Activated B cell treated with CpG ODN at 0.5 μM for 24 hours (primary cell): ENCODE measurements at regions of chr7 and their contacts with region 1.

Region 1: DNA sequence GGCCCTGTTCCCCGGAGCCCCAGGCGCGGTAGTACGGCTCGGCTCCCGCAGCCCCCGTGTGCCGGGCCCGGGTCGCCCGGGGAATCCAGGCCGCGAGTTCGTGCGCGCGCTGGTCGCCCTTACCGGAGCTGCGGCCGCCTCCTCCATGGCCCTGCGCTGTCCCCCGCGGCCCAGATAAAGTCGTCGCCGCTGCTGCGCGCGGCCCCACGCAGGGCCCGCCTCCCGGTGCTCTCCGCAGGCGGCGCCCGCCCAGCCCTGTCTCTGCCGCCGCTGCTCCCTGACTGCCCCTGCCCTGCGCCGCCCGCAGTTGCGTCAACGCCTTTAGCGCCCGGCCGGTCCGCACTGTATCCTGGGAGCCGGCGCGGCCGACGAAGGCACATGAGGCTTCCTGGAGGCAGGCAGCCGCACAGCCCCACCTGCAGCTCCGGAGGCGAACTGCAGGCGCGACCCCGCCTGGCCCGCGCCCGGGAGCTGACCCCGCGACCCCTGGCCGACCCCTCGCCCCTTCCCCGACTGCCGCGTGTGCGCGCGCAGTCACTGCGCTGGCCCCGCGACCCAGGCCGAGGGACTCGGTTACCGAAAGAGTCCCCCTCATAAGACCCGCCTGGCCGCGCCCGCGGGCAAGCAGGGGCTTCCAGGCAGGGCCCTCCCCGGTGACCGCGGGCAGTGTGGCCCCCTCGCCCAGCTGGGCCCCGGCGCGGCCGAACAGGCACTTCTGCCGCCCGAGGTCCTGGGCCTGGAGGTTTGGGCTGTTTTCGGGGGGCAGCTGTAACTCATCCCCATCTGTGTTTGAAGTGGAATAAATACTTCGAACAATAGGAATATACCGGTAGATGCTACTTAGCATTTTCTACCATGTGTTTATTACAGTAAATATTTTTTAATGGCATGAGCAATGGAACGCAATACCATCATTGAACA is 127.1 kb upstream of the ZNF746 start:
- DNase-seq: peak; percentile 95
- ATAC-seq: peak; percentile 92
- H3K4me3 Mint-ChIP-seq: peak overlapping the region; percentile 90
- H3K27ac Mint-ChIP-seq: peak overlapping the region; percentile 80
- H3K4me1 Mint-ChIP-seq: peaks cover 43% of the 10 kb centered on the region
- H3K27me3 Mint-ChIP-seq: peaks cover 5% of the 10 kb centered on the region
- CTCF ChIP-seq: peak; percentile 87

Region 2: DNA sequence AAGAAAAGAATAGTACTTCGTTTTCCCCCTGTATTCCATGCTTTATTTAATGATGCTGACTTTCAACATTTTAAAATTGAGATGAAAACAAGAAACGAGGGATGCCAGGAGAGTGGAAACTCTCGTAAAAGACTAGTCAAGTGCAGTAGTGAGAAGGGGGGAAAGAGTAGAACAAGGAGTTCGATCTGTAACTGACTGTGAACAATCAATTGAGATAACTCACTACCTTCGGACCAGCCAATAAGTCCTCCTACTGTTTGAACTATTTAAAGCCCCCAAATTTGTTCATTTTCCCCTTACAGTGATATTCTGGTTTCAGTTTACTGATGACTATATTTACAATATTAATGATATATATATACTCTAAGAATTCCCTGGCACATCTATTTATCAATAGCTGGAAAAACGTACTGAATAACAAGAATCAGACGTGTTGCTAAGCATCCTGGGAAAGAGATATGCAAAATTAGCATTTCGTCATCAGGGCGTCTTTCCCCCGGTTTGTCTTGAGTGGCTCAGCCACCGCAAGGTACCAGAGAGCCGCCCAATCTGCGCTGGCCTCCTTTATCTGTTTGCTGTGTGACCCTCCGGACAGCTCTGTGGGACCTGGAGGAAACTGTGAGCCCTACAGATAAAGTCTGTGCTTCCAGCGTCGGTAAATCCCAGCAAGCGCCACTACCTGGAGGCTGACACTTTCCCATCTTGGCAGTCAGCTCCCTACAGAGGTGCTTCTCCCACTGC is 637.5 kb before region 1 on chr7:
- CTCF ChIA-PET with region 1: no interaction called
- POLR2A ChIA-PET with region 1: no interaction called
- intact Hi-C with region 1: loop called (anchors 5 kb)
- DNase-seq: peak; percentile 60
- ATAC-seq: peak; percentile 85
- H3K4me3 Mint-ChIP-seq: peak overlapping the region; percentile 96
- H3K27ac Mint-ChIP-seq: peak overlapping the region; percentile 93
- H3K4me1 Mint-ChIP-seq: peaks cover 50% of the 10 kb centered on the region
- H3K27me3 Mint-ChIP-seq: peaks cover 2% of the 10 kb centered on the region
- CTCF ChIP-seq: no peak

Region 3: DNA sequence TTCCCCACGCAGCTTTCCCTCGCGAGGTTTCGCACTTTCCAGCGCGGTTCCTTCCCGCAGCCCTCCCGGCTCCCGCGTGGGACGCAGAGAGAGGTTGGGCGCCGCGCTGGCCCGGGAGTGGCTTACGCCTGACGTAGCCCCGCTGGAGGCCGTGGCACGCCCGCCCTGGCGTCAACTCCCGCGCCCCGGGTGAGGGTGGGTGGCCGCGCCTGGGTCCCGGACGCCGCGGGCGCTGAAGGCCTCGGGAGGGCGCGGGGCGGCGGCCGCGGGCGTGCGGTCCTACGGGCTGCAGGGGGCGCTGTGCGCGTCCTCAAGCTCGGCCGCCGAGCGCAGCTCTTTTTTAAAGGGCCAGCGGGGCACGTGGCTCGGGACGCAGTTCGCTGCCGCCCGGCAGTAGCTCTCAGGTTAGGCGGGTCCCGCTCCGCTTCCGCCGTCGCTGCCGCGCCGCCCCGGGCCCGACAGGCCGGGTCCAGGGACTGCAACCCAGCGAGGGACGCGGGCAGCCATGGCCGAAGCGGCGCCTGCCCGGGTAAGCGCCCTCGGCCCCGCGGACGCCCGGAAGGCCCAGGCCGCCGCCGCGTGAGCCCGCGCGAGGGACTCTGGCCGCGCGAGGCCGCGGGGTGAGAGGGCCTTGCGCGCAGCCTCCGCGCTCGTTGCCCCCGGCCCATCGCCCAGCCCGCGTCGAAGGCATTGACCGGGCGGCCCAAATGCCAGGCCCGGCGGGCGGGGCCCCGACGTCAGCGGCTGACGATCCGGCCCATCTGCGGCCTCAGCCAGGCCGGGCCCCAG is 362.7 kb before region 1 on chr7 and contains the start of gene ZNF783:
- CTCF ChIA-PET with region 1: no interaction called
- POLR2A ChIA-PET with region 1: no interaction called
- intact Hi-C with region 1: loop called (anchors 1 kb)
- DNase-seq: peak; percentile 88
- ATAC-seq: peak; percentile 91
- H3K4me3 Mint-ChIP-seq: peak within 1 kb of the TSS; percentile 89
- H3K27ac Mint-ChIP-seq: peak within 1 kb of the TSS; percentile 90
- H3K4me1 Mint-ChIP-seq: peaks cover 23% of the 10 kb centered on the region
- H3K27me3 Mint-ChIP-seq: no peaks in the 10 kb centered on the region
- CTCF ChIP-seq: no peak
- total RNA-seq, gene ZNF783: 28.5 and 34.1 TPM in 2 replicates

Region 4: DNA sequence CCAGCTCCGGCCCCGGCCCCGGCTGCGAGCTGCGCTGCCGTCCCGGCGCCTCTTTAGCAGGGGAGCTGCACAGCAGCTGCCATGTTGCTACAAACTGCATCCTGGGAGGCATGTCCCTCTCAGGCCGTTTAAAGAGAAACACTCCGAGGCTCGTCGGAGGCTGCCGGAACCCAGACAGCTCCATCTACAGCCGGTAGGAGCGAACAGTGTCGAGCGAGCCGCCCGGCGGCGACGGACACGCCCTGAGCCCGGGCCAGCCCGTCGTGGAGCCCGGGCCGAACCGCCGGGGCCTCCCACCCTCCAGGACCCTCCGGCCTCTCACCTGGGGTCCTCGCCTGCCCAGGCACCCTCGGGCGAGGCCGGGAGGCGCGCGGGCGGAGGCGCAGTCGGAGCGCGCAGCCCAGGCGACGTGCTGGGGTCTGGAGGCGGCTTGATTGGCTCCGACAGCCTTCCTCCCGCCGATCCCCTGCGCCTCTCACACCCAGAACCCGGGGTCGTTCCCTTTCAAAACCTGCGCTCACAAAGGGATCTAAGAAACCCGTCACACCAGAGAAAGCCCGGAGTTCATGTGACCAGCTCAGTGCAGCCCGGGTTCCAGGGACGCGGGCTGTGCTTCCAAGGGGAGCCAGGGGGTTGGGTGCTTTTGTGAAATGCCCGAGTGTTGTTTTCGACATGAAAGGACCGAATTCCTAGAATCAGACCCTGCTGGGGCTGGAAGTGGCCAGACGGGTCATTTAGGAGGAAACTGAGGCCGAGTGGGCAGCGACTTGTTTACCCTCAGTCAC is 164.0 kb before region 1 on chr7 and contains the start of gene ZNF777:
- CTCF ChIA-PET with region 1: interaction called, 5 read pairs
- POLR2A ChIA-PET with region 1: interaction called, 7 read pairs
- intact Hi-C with region 1: loop called (anchors 1 kb)
- DNase-seq: peak; percentile 69
- ATAC-seq: peak; percentile 97
- H3K4me3 Mint-ChIP-seq: peak within 1 kb of the TSS; percentile 87
- H3K27ac Mint-ChIP-seq: peak within 1 kb of the TSS; percentile 65
- H3K4me1 Mint-ChIP-seq: peaks cover 24% of the 10 kb centered on the region
- H3K27me3 Mint-ChIP-seq: peaks cover 9% of the 10 kb centered on the region
- CTCF ChIP-seq: no peak
- total RNA-seq, gene ZNF777: 14.0 and 16.2 TPM in 2 replicates

Region 5: GRCh38 chr7:149662591-149663095 is 38.0 kb after region 1 on chr7:
- CTCF ChIA-PET with region 1: no interaction called
- POLR2A ChIA-PET with region 1: no interaction called
- intact Hi-C with region 1: no loop called
- DNase-seq: peak; percentile 25
- ATAC-seq: peak; percentile 66
- H3K4me3 Mint-ChIP-seq: no peak overlapping the region
- H3K27ac Mint-ChIP-seq: no peak overlapping the region
- H3K4me1 Mint-ChIP-seq: no peaks in the 10 kb centered on the region
- H3K27me3 Mint-ChIP-seq: peaks cover 41% of the 10 kb centered on the region
- CTCF ChIP-seq: no peak

Region 6: DNA sequence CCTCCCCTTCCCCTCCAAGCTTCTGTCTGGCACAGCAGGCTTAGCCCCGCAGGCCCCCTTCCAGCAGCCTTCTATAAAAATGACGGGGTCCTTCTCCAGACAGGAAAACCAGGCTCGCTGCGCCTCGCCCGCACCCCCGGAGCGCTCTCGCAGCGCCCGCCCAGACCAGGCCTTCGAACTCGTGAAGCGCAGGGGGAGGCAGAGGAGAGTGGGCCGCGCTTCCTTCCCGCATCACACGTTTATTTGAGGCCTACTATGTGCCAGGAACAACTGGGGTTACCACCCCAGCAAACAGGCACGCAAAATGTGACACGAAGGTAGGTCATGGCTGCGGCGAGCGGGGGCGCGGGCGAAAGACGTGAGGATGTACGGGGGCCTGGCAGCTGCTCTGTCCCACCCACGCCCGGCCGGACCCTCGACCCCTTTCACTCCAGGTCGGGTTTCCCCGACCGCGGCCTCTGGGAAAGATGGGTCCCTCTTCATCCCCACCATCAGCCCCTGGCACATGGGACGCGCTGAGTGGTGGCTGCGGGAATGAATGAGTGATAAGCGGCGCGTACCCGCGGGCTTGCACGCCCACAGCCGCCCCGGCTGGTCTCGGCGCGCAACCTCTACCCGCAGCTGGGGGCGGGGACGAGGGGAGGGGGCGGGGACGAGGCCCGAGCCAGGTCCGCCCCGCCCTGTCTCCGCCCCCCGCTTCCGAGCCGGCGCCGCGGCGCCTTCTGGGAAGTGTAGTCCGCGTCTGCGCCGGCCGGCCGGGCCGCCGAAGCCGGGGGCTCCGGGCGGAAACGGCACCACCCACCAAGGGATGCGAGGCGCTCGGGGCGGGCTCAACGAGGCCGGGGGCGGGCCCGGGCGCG is 89.6 kb after region 1 on chr7:
- CTCF ChIA-PET with region 1: interaction called, 3 read pairs
- POLR2A ChIA-PET with region 1: no interaction called
- intact Hi-C with region 1: loop called (anchors 1 kb)
- DNase-seq: peak; percentile 88
- ATAC-seq: peak; percentile 91
- H3K4me3 Mint-ChIP-seq: peak overlapping the region; percentile 83
- H3K27ac Mint-ChIP-seq: no peak overlapping the region
- H3K4me1 Mint-ChIP-seq: peaks cover 17% of the 10 kb centered on the region
- H3K27me3 Mint-ChIP-seq: no peaks in the 10 kb centered on the region
- CTCF ChIP-seq: no peak

Region 7: GRCh38 chr7:151028131-151028947 is 1403.7 kb after region 1 on chr7 and contains the start of gene ABCB8:
- CTCF ChIA-PET with region 1: no interaction called
- POLR2A ChIA-PET with region 1: no interaction called
- intact Hi-C with region 1: loop called (anchors 5 kb)
- DNase-seq: peak; percentile 94
- ATAC-seq: peak; percentile 93
- H3K4me3 Mint-ChIP-seq: peak within 1 kb of the TSS; percentile 96
- H3K27ac Mint-ChIP-seq: peak within 1 kb of the TSS; percentile 97
- H3K4me1 Mint-ChIP-seq: peaks cover 22% of the 10 kb centered on the region
- H3K27me3 Mint-ChIP-seq: peaks cover 9% of the 10 kb centered on the region
- CTCF ChIP-seq: no peak
- total RNA-seq, gene ABCB8: 38.9 and 46.5 TPM in 2 replicates